Posterior cingulate gyrus (tissue), 11 donors: ENCODE measurements at regions of chr10 and their contacts with region 1.

Region 1: GRCh38 chr10:122565728-122566206 is 5.2 kb downstream of the DMBT1 start:
- DNase-seq: peak; percentile 42 to 97 (median 87)

Region 2: GRCh38 chr10:122279725-122280141 is 286.0 kb before region 1 on chr10:
- intact Hi-C with region 1: loop called (anchors 5 kb)
- DNase-seq: peak in 9 of 10 donors; percentile 42 to 95 (median 73)

Region 3: DNA sequence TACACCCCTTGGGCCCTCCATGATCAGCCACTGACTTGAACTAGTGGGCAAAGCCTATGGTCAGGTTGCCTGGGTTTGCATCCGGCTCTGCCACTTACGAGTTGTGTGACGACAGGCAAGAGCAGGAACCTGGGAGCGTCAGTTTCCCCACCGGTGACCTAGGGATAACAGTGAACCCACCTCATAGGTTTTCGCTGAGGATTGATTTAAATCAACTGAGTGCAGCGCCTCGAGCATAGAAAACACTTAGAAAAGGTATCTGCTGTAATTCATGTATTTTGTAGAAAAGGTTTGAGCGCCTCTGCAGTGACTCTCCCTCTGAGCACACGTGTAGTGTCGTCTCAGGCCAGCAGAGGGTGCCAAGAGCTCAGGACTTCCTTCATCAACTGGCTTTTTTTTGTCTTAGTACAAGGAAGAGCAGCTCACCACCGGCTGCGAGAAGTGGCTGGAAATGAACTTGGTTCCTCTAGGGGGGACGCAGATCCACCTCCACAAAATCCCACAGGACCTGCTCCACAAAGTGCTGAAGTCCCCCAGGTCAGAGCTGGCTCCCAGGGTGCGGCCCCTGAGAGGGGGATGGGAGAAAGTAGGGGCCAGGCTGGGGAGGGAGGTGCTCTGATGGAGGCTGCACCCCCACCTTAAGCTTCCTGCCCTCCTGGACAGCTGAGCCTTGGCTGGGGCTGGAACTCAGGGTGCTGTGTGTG is 267.0 kb before region 1 on chr10:
- intact Hi-C with region 1: loop called (anchors 1 kb)
- DNase-seq: peak; percentile 43 to 96 (median 78)

Region 4: GRCh38 chr10:122342293-122343134 is 223.3 kb before region 1 on chr10:
- intact Hi-C with region 1: loop called (anchors 2 kb)
- DNase-seq: peak in 5 of 10 donors; percentile 26 to 62 (median 60)

Region 5: GRCh38 chr10:122435212-122435827 is 130.4 kb before region 1 on chr10:
- intact Hi-C with region 1: loop called (anchors 5 kb)
- DNase-seq: no peak

Region 6: DNA sequence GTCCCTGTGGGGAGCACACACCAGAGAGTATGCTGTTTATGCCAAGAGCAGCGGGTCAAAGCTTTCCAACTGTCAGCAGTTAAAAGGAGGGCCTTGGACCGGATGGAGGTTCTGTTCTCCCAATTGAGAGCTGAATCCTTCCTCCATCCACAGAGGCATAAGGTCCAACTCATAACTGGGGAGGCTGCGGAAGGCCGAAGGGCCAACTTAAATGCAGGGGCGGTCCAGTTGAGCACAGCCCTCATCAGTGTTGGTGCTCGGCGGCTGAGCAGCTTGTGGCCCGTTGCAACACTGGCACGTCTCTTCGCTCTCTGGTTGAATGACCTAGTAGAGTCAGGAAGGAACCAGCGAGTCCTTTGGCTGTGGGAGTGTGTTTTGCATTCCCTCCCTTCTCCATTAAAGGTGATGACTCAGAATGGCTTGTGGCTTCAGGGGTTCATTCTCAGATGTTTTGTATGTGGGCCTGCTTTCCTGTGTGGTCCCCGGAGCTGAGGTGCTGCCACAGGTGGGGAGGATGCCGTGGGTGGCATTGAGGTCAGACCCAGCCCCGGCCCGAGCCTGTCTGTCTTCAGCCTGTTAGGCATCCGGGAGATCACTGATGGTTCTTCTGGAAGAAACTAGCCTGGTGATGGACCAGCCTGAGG is 50.1 kb before region 1 on chr10:
- intact Hi-C with region 1: loop called (anchors 10 kb)
- DNase-seq: no peak